AG04449 (cell line): ENCODE measurements at regions of chr1 and their contacts with region 1.

Region 1: GRCh38 chr1:182595641-182596240 is 6.7 kb upstream of the RNASEL start:
- DNase-seq: no peak
- H3K4me3 ChIP-seq: no peak overlapping the region
- CTCF ChIP-seq: peak; percentile 74

Region 2: GRCh38 chr1:182348961-182349747 is 246.6 kb before region 1 on chr1:
- CTCF ChIA-PET with region 1: no interaction called
- POLR2A ChIA-PET with region 1: no interaction called
- DNase-seq: peak; percentile 5
- H3K4me3 ChIP-seq: no peak overlapping the region
- CTCF ChIP-seq: no peak

Region 3: GRCh38 chr1:182575539-182576149 is 20.1 kb before region 1 on chr1:
- CTCF ChIA-PET with region 1: interaction called, 17 read pairs
- POLR2A ChIA-PET with region 1: no interaction called
- DNase-seq: no peak
- H3K4me3 ChIP-seq: no peak overlapping the region
- CTCF ChIP-seq: no peak

Region 4: DNA sequence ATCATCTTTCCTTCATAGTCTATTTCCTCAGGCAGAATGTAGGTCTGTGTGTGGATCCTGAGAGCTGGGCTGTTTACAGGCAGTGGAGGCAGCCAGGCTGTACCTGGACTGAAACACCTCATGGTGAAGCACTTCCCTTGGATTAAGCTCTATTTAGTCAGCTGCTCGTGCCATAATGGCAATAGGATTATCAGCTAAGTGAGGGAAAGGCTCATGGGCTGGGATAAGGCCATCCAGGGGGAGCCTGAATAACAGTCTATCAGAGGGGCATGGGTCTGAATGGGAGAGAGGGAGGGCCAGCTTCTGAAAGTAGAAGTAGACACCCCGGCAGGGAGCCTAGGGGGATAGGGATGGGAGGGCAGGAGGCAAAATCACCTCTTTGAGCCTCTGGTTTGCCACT is 15.0 kb before region 1 on chr1:
- CTCF ChIA-PET with region 1: interaction called, 17 read pairs
- POLR2A ChIA-PET with region 1: interaction called, 3 read pairs
- DNase-seq: no peak
- H3K4me3 ChIP-seq: no peak overlapping the region
- CTCF ChIP-seq: no peak